ENCODE measurements at regions of chr3 and their contacts with region 1.

Region 1: DNA sequence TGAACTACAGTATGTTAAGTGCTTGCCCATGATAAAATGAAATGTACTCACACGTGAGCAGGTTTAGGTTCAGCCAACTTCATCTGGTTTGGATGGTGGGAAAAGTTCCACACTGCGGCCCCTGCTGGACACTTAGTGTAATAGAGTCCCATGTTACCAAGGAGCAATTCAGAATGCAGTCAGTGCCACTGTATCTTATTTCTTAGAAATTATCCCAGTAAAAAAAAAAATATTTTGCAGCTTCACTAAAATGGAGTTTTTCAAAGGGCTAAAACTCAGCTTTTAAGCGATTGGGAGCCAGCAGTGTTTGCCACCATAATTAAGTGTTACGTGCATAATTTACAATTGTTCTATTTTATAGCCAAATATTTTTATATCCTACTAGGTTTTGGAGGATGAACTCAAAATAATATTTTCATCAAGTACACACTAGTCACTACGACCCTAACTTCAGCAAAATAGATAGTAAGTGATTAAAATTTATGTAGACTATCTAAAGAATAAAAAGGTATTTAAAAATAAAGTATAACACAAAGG is 371.7 kb upstream of the GBE1 start:
- DNase-seq: peak; percentile 35
- H3K4me3 Mint-ChIP-seq: no peak overlapping the region
- H3K27ac Mint-ChIP-seq: no peak overlapping the region
- H3K4me1 Mint-ChIP-seq: no peaks in the 10 kb centered on the region
- H3K27me3 Mint-ChIP-seq: no peaks in the 10 kb centered on the region

Region 2: GRCh38 chr3:81490541-81491288 is 642.4 kb before region 1 on chr3:
- CTCF ChIA-PET with region 1: interaction called, 14 read pairs
- POLR2A ChIA-PET with region 1: no interaction called
- DNase-seq: peak; percentile 78
- H3K4me3 Mint-ChIP-seq: no peak overlapping the region
- H3K27ac Mint-ChIP-seq: no peak overlapping the region
- H3K4me1 Mint-ChIP-seq: no peaks in the 10 kb centered on the region
- H3K27me3 Mint-ChIP-seq: no peaks in the 10 kb centered on the region

Region 3: DNA sequence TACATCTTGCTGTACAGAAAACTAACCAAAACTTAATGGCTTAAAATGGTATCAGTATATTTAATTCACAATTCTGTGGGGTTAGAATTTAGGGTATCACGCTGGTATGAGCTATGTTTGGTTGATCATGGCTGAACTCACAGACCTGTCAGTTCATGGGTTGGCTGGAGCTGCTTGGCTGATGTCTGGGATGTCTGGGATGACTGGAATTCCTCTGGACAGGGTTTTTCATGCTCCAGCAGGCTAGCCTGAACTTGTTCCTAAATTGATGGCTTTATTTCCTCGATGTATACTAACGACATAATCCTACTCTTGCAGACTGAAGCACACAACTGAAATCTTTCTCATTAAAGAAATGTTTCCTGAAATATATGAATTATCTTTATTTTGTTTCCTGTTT is 32.8 kb before region 1 on chr3:
- CTCF ChIA-PET with region 1: no interaction called
- POLR2A ChIA-PET with region 1: no interaction called
- DNase-seq: no peak
- H3K4me3 Mint-ChIP-seq: no peak overlapping the region
- H3K27ac Mint-ChIP-seq: no peak overlapping the region
- H3K4me1 Mint-ChIP-seq: no peaks in the 10 kb centered on the region
- H3K27me3 Mint-ChIP-seq: no peaks in the 10 kb centered on the region

Region 4: GRCh38 chr3:82186017-82186416 is 52.9 kb after region 1 on chr3:
- CTCF ChIA-PET with region 1: no interaction called
- POLR2A ChIA-PET with region 1: no interaction called
- DNase-seq: no peak
- H3K4me3 Mint-ChIP-seq: no peak overlapping the region
- H3K27ac Mint-ChIP-seq: no peak overlapping the region
- H3K4me1 Mint-ChIP-seq: no peaks in the 10 kb centered on the region
- H3K27me3 Mint-ChIP-seq: no peaks in the 10 kb centered on the region

Measured in activated CD4-positive, alpha-beta memory T cell treated with anti-CD3 and anti-CD28 coated beads, Interleukin-2, amount 10 ng/mL, durations not matched to agents 7 days and 5 days (primary cell).